MCF 10A (cell line): ENCODE measurements at regions of chr10 and their contacts with region 1.

Region 1: DNA sequence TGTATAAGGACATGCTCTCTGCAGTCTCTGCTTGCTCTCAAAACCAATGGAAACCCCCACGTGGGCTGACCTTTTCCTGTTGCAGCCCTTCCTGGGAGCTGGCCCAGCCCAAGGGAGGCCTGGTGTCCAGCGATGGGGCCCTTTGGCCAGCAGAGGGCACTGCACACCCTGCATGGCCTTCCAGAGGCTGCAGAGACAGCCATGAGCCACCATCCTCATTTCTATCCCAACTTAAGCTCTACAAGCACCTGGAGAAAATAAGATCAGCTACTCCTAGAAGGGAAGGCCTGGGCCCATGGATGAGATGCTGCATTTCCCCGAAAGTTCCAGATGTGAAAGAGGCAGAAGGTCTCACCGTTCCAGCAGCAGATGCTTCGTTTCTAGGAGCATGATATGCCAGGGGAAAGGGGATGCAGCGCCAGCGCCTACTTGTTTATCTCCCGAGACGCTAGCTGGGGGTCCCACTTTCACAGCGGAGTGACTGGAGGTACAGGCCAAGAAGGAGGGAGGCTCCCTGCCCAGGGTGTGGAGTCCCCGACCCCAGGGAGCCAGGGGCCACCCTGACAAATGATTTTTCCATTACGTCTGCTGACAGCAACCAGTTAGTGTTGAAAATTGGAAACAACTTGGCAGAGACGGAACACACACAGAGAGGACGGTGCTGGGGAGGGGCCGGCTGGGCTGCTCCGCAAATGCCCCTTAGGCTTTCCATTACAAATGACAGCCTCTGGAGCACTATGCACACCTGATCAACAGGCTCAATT is 106.4 kb downstream of the ZRANB1 start:
- DNase-seq: peak; percentile 86
- H3K4me3 Mint-ChIP-seq: no peak overlapping the region
- H3K27ac Mint-ChIP-seq: peak overlapping the region; percentile 22
- H3K4me1 Mint-ChIP-seq: peaks cover 28% of the 10 kb centered on the region
- H3K27me3 Mint-ChIP-seq: no peaks in the 10 kb centered on the region
- CTCF ChIP-seq: peak; percentile 90

Region 2: GRCh38 chr10:125060826-125061556 is 12.7 kb after region 1 on chr10:
- CTCF ChIA-PET with region 1: interaction called, 105 read pairs
- POLR2A ChIA-PET with region 1: interaction called, 15 read pairs
- intact Hi-C with region 1: loop called (anchors 1 kb)
- DNase-seq: peak; percentile 75
- H3K4me3 Mint-ChIP-seq: peak overlapping the region; percentile 19
- H3K27ac Mint-ChIP-seq: peak overlapping the region; percentile 73
- H3K4me1 Mint-ChIP-seq: peaks cover 46% of the 10 kb centered on the region
- H3K27me3 Mint-ChIP-seq: no peaks in the 10 kb centered on the region
- CTCF ChIP-seq: peak; percentile 72

Region 3: GRCh38 chr10:125118011-125118611 is 69.8 kb after region 1 on chr10:
- CTCF ChIA-PET with region 1: interaction called, 13 read pairs
- POLR2A ChIA-PET with region 1: interaction called, 7 read pairs
- intact Hi-C with region 1: no loop called
- DNase-seq: no peak
- H3K4me3 Mint-ChIP-seq: no peak overlapping the region
- H3K27ac Mint-ChIP-seq: no peak overlapping the region
- H3K4me1 Mint-ChIP-seq: peaks cover 32% of the 10 kb centered on the region
- H3K27me3 Mint-ChIP-seq: no peaks in the 10 kb centered on the region
- CTCF ChIP-seq: no peak

Region 4: DNA sequence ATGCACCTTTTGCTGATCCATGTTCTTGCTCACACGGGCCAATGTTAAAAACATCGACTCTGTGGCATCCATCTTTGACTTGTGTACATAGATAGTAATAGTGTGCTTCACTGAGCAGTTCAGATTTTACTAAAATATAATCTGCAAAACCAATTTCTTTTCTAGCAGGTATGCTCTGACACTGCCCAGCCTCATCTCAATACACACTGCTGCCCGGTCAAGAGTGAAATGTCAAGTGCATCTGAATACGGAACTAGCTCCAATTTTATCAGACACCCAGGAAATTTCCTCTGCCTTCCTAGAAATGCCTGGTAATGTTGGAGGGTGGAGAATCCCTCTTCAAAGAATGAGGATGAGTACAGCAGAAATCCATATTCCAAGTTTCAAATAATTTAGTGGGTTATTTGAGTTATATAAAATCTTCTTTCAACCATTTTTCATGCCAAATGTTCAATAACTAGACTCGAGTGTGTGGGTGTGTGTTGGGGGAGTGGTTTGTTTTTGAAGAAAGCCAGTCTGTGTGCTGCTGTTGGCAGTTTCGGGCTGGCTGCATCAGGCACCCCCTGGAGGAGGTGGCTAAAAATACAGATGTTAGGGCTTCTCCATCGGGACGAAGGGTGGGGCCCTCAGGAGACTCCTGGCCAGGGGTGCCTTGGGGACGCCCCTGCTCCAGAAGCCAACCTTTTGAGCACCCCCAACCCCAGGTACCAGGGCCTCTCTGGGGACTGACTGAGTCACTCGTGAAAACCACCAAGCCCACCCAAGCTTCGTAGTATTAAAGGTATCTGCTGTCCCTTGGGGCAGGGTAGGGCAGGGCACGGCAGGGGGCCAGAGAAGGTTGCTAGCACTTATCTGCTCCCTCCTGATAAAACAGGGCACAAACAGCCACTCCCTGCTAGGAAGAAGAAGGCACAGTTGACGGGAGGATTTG is 96.7 kb after region 1 on chr10:
- CTCF ChIA-PET with region 1: interaction called, 3 read pairs
- POLR2A ChIA-PET with region 1: interaction called, 3 read pairs
- intact Hi-C with region 1: loop called (anchors 1 kb)
- DNase-seq: peak; percentile 74
- H3K4me3 Mint-ChIP-seq: no peak overlapping the region
- H3K27ac Mint-ChIP-seq: peak overlapping the region; percentile 39
- H3K4me1 Mint-ChIP-seq: peaks cover 51% of the 10 kb centered on the region
- H3K27me3 Mint-ChIP-seq: no peaks in the 10 kb centered on the region
- CTCF ChIP-seq: peak; percentile 48

Region 5: GRCh38 chr10:125231116-125231812 is 183.0 kb after region 1 on chr10:
- CTCF ChIA-PET with region 1: no interaction called
- POLR2A ChIA-PET with region 1: no interaction called
- intact Hi-C with region 1: loop called (anchors 10 kb)
- DNase-seq: peak; percentile 90
- H3K4me3 Mint-ChIP-seq: peak overlapping the region; percentile 29
- H3K27ac Mint-ChIP-seq: peak overlapping the region; percentile 83
- H3K4me1 Mint-ChIP-seq: peaks cover 14% of the 10 kb centered on the region
- H3K27me3 Mint-ChIP-seq: no peaks in the 10 kb centered on the region
- CTCF ChIP-seq: no peak

Region 6: DNA sequence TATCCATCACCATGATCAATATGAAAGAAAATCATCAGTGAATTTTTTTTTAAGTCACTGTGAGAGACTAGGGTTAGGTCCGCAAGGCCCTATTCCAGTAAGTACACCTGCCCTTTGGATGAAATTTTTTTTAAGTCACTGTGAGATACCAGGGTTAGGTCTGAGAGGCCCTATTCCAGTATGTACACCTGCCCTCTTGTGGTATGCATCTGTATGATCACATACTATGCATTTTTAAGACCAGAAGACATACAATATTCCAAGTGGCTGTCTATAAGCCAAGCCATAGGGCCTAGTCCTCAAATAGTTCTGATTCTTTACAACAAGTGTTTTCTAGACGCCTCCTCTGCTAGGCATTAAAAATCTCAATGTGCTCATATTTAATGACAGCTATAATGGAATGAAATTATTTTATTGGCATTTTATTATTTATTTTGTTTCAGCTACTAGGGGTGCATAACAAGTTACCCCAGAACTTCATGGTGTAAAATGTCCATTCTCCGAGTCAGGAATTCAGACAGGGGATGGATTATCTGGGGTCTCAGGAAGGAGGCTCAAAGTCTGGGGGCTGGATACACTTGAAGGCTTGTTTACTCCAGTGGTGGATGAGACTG is 581.6 kb after region 1 on chr10:
- CTCF ChIA-PET with region 1: interaction called, 13 read pairs
- POLR2A ChIA-PET with region 1: no interaction called
- intact Hi-C with region 1: loop called (anchors 5 kb)
- DNase-seq: peak; percentile 63
- H3K4me3 Mint-ChIP-seq: no peak overlapping the region
- H3K27ac Mint-ChIP-seq: no peak overlapping the region
- H3K4me1 Mint-ChIP-seq: no peaks in the 10 kb centered on the region
- H3K27me3 Mint-ChIP-seq: peaks cover 57% of the 10 kb centered on the region
- CTCF ChIP-seq: peak; percentile 49